Esophagus muscularis mucosa (tissue), 4 donors: ENCODE measurements at regions of chr9 and their contacts with region 1.

Region 1: GRCh38 chr9:109556061-109556460 is 58.0 kb upstream of the PTPN3 start:
- DNase-seq: peak; percentile 74
- H3K4me3 ChIP-seq: no peak overlapping the region
- H3K27ac ChIP-seq: no peak overlapping the region
- H3K4me1 ChIP-seq: no peaks in the 10 kb centered on the region
- H3K27me3 ChIP-seq: no peaks in the 10 kb centered on the region
- CTCF ChIP-seq: no peak
- EP300 ChIP-seq: no peak
- POLR2A ChIP-seq: no peak

Region 2: DNA sequence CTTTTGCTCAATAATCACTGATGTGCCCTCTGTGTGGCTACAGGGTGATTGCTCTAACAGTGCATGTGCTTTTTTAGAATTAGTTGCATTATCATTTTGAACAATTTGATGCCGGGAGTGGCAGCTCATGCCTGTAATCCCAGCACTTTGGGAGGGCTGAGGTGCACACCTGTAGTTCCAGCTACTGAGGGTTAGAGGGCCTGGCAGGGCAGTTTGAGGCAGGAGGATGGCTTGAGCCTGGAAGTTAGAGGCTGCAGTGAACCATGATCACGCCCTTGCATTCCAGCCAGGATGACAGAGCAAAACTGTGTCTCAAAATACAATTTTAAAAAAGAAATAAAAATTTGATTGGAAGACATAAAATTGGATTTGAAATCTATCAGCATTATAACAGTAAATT is 672.9 kb after region 1 on chr9:
- intact Hi-C with region 1: loop called (anchors 5 kb)
- DNase-seq: no peak
- H3K4me3 ChIP-seq: no peak overlapping the region
- H3K27ac ChIP-seq: no peak overlapping the region
- H3K4me1 ChIP-seq: no peaks in the 10 kb centered on the region
- H3K27me3 ChIP-seq: no peaks in the 10 kb centered on the region
- CTCF ChIP-seq: no peak
- EP300 ChIP-seq: no peak
- POLR2A ChIP-seq: no peak